Activated naive CD8-positive, alpha-beta T cell treated with anti-CD3 and anti-CD28 coated beads, Interleukin-2, amount 10 ng/mL, durations not matched to agents 7 days and 5 days (primary cell): ENCODE measurements at regions of chr5 and their contacts with region 1.

Region 1: GRCh38 chr5:127072861-127073846 is at the start of gene C5orf63:
- DNase-seq: peak; percentile 84
- ATAC-seq: peak; percentile 99
- H3K4me3 Mint-ChIP-seq: peak within 1 kb of the TSS; percentile 85
- H3K27ac Mint-ChIP-seq: peak within 1 kb of the TSS; percentile 82
- H3K4me1 Mint-ChIP-seq: peaks cover 11% of the 10 kb centered on the region
- H3K27me3 Mint-ChIP-seq: no peaks in the 10 kb centered on the region
- total RNA-seq, gene C5orf63: 8.8 to 11.6 TPM

Region 2: DNA sequence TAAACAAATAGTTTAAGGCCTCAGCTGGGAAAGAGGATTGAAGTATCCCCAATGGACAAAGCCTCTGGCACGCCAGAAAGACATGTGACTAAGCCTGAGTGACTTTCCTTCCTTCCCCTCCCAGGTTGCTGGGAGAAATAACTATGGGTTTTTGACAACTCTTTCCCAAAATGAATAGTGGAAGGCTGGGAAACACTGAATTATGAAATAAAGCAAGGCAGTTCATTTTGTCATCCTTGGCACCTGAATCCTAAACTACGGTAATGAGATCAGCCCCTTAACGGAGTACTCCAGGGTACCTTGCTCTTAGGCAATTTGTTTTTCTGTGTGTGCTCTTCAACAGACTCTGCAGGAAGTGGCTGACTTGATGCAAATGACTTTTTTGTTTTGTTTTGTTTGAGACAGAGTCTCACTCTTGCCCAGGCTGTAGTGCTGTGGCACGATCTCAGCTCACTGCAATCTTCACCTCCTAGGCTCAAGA is 221.0 kb before region 1 on chr5:
- POLR2A ChIA-PET with region 1: interaction called, 10 read pairs
- DNase-seq: no peak
- ATAC-seq: peak; percentile 54
- H3K4me3 Mint-ChIP-seq: peak overlapping the region; percentile 87
- H3K27ac Mint-ChIP-seq: peak overlapping the region; percentile 99
- H3K4me1 Mint-ChIP-seq: peaks cover 47% of the 10 kb centered on the region
- H3K27me3 Mint-ChIP-seq: no peaks in the 10 kb centered on the region